Heart left ventricle (tissue), 16 donors: ENCODE measurements at regions of chr11 and their contacts with region 1.

Region 1: GRCh38 chr11:47819743-47820142 is 28.4 kb downstream of the NUP160 start:
- DNase-seq: no peak
- ATAC-seq: no peak
- H3K4me3 ChIP-seq: no peak overlapping the region
- H3K27ac ChIP-seq: no peak overlapping the region
- H3K4me1 ChIP-seq: no peaks in the 10 kb centered on the region
- H3K27me3 ChIP-seq: no peaks in the 10 kb centered on the region
- CTCF ChIP-seq: no peak
- POLR2A ChIP-seq: no peak

Region 2: GRCh38 chr11:47204637-47204989 is 615.1 kb before region 1 on chr11:
- intact Hi-C with region 1: no loop called
- DNase-seq: no peak
- ATAC-seq: no peak
- H3K4me3 ChIP-seq: no peak overlapping the region
- H3K27ac ChIP-seq: no peak overlapping the region
- H3K4me1 ChIP-seq: no peaks in the 10 kb centered on the region
- H3K27me3 ChIP-seq: no peaks in the 10 kb centered on the region
- CTCF ChIP-seq: no peak
- POLR2A ChIP-seq: no peak

Region 3: DNA sequence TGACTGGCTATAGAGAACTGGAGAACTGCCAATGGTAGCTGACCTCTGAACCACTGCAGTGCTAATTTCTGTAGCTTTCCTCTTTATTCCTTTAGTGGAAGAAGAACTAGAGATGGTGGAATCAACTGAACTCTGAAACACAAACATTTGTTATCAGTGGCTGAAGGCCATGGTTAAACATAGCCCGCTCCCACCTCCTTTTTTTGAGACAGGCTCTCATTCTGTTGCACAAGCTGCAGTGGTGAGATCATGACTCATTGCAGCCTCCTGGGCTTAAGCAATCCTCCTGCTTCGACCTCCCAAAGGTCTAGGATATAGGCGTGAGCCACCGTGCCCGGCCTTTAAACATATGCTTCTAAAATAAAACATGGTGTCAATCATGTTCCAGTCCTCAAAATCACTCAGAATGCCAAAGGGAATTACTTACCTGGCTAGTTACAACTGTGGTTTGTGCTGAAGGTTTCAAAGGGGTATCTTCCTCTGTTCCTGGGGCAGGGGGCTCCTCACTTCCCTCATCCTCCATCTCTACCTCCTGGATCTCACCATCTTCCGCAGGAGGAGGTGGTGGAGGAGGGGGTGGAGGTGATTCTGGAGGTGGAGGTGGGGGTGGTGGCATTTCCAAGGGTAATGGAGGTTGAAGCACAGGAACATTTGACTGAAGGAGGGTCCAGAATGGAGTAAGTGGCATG is 95.6 kb before region 1 on chr11:
- intact Hi-C with region 1: loop called in 1 of 10 experiments (anchors 10 kb)
- DNase-seq: peak in 1 of 5 donors; percentile 40
- ATAC-seq: peak; percentile 39 to 78 (median 60)
- H3K4me3 ChIP-seq: no peak overlapping the region
- H3K27ac ChIP-seq: peak overlapping the region in 6 of 12 donors; percentile 7 to 65 (median 32)
- H3K4me1 ChIP-seq: peaks cover 0 to 17% (median 8%) of the 10 kb centered on the region in 12 donors
- H3K27me3 ChIP-seq: no peaks in the 10 kb centered on the region
- CTCF ChIP-seq: no peak
- POLR2A ChIP-seq: no peak

Region 4: GRCh38 chr11:47731475-47731874 is 88.3 kb before region 1 on chr11:
- intact Hi-C with region 1: loop called in 2 of 10 experiments (anchors 10 kb)
- DNase-seq: no peak
- ATAC-seq: no peak
- H3K4me3 ChIP-seq: no peak overlapping the region
- H3K27ac ChIP-seq: no peak overlapping the region
- H3K4me1 ChIP-seq: no peaks in the 10 kb centered on the region
- H3K27me3 ChIP-seq: no peaks in the 10 kb centered on the region
- CTCF ChIP-seq: no peak
- POLR2A ChIP-seq: no peak

Region 5: GRCh38 chr11:47750725-47751124 is 69.0 kb before region 1 on chr11:
- intact Hi-C with region 1: loop called in 1 of 10 experiments (anchors 5 kb)
- DNase-seq: no peak
- ATAC-seq: no peak
- H3K4me3 ChIP-seq: no peak overlapping the region
- H3K27ac ChIP-seq: no peak overlapping the region
- H3K4me1 ChIP-seq: no peaks in the 10 kb centered on the region
- H3K27me3 ChIP-seq: no peaks in the 10 kb centered on the region
- CTCF ChIP-seq: no peak
- POLR2A ChIP-seq: no peak